Mammary epithelial cell (primary cell): ENCODE measurements at regions of chr3 and their contacts with region 1.

Region 1: GRCh38 chr3:107676469-107677309 is 153.9 kb downstream of the BBX start:
- DNase-seq: no peak
- H3K4me3 ChIP-seq: no peak overlapping the region
- H3K27ac ChIP-seq: no peak overlapping the region
- H3K4me1 ChIP-seq: no peaks in the 10 kb centered on the region
- H3K27me3 ChIP-seq: no peaks in the 10 kb centered on the region
- CTCF ChIP-seq: peak; percentile 46 to 52

Region 2: GRCh38 chr3:107429320-107430181 is 247.1 kb before region 1 on chr3:
- CTCF ChIA-PET with region 1: no interaction called
- dilution Hi-C with region 1: no loop called
- in situ Hi-C with region 1: no loop called
- intact Hi-C with region 1: no loop called
- DNase-seq: peak; percentile 75
- H3K4me3 ChIP-seq: peak overlapping the region; percentile 38 to 44 (median 38)
- H3K27ac ChIP-seq: no peak overlapping the region
- H3K4me1 ChIP-seq: peaks cover 32% of the 10 kb centered on the region
- H3K27me3 ChIP-seq: no peaks in the 10 kb centered on the region
- CTCF ChIP-seq: peak; percentile 63 to 91

Region 3: GRCh38 chr3:107496855-107497254 is 179.8 kb before region 1 on chr3:
- CTCF ChIA-PET with region 1: no interaction called
- dilution Hi-C with region 1: no loop called
- in situ Hi-C with region 1: no loop called
- intact Hi-C with region 1: no loop called
- DNase-seq: no peak
- H3K4me3 ChIP-seq: no peak overlapping the region
- H3K27ac ChIP-seq: no peak overlapping the region
- H3K4me1 ChIP-seq: no peaks in the 10 kb centered on the region
- H3K27me3 ChIP-seq: peaks cover 5% of the 10 kb centered on the region
- CTCF ChIP-seq: no peak

Region 4: DNA sequence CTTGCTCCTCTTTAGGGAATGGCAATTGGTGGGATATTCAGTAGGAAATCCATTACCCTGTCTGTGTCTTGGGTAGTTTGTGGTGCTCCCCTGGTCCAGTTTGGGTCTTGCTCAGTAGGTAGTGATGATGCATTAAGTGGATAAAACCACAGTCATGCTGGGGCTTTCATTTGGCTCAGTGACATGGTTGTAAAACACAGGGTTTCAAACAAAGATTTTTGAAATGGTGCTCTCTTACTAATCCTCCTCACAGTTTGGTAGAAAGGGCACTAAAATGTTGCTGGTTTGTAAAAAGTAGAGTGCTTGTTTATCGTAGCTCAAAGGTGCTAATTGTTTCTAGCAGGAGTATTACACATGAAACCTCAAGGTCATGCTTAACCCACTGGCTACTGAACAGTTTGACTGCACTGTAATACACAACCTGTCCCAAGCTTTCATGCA is 131.0 kb before region 1 on chr3:
- CTCF ChIA-PET with region 1: no interaction called
- dilution Hi-C with region 1: no loop called
- in situ Hi-C with region 1: no loop called
- intact Hi-C with region 1: no loop called
- DNase-seq: peak; percentile 14
- H3K4me3 ChIP-seq: no peak overlapping the region
- H3K27ac ChIP-seq: no peak overlapping the region
- H3K4me1 ChIP-seq: no peaks in the 10 kb centered on the region
- H3K27me3 ChIP-seq: no peaks in the 10 kb centered on the region
- CTCF ChIP-seq: no peak

Region 5: GRCh38 chr3:107620534-107620933 is 56.2 kb before region 1 on chr3:
- CTCF ChIA-PET with region 1: no interaction called
- dilution Hi-C with region 1: no loop called
- in situ Hi-C with region 1: no loop called
- intact Hi-C with region 1: no loop called
- DNase-seq: no peak
- H3K4me3 ChIP-seq: no peak overlapping the region
- H3K27ac ChIP-seq: no peak overlapping the region
- H3K4me1 ChIP-seq: peaks cover 4% of the 10 kb centered on the region
- H3K27me3 ChIP-seq: no peaks in the 10 kb centered on the region
- CTCF ChIP-seq: peak in 1 of 2 donors; percentile 3

Region 6: GRCh38 chr3:107660306-107660976 is 16.2 kb before region 1 on chr3:
- CTCF ChIA-PET with region 1: interaction called, 11 read pairs
- dilution Hi-C with region 1: no loop called
- in situ Hi-C with region 1: no loop called
- intact Hi-C with region 1: no loop called
- DNase-seq: no peak
- H3K4me3 ChIP-seq: no peak overlapping the region
- H3K27ac ChIP-seq: no peak overlapping the region
- H3K4me1 ChIP-seq: no peaks in the 10 kb centered on the region
- H3K27me3 ChIP-seq: no peaks in the 10 kb centered on the region
- CTCF ChIP-seq: peak; percentile 66

Region 7: DNA sequence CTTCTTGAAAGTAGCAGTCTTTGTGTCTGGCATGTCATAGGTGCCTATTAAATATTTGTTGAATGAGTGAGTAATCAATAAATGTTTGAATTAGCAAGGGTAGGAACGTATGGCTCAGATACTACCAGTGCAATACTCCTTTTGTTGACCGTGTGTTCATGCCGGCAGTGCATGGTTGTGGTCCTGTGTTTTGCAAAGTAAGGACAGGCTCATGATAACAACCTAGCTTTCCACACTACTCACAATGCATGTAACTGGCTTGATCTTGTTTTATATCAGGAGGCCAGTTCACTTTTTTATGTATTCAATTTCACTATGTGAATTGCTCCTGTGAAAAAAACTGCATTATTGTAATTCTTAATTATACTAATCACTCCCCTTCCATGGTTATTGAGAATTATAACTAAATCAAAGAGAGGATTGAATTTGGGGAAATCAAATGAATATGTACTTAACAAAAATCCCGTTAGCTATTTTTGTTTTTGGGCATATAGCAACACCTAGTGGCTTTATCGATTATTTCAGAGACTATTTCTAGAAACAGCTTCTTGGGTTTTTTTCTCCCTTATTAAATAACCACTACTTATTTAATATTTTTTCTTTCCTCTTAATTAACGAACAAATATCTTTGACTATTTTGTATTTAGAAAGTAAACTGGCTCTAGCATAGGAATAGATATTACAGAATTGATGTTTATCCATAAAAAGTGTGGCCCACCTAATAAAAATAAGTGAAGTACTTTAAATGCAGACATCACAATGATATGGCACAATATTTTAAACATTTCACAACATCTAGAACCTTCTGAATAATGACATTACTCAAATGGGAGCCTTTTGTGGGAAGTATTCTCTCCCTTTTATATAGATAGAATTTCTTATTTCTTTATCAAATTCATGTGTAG is 64.6 kb after region 1 on chr3:
- CTCF ChIA-PET with region 1: no interaction called
- dilution Hi-C with region 1: no loop called
- in situ Hi-C with region 1: loop called in 1 of 2 experiments (anchors 10 kb)
- intact Hi-C with region 1: loop called (anchors 1 kb)
- DNase-seq: peak; percentile 11
- H3K4me3 ChIP-seq: no peak overlapping the region
- H3K27ac ChIP-seq: no peak overlapping the region
- H3K4me1 ChIP-seq: no peaks in the 10 kb centered on the region
- H3K27me3 ChIP-seq: no peaks in the 10 kb centered on the region
- CTCF ChIP-seq: peak; percentile 43 to 47

Region 8: GRCh38 chr3:107846279-107846852 is 169.7 kb after region 1 on chr3:
- CTCF ChIA-PET with region 1: no interaction called
- dilution Hi-C with region 1: no loop called
- in situ Hi-C with region 1: no loop called
- intact Hi-C with region 1: loop called (anchors 5 kb)
- DNase-seq: peak; percentile 25
- H3K4me3 ChIP-seq: no peak overlapping the region
- H3K27ac ChIP-seq: no peak overlapping the region
- H3K4me1 ChIP-seq: no peaks in the 10 kb centered on the region
- H3K27me3 ChIP-seq: no peaks in the 10 kb centered on the region
- CTCF ChIP-seq: peak; percentile 56 to 71

Region 9: DNA sequence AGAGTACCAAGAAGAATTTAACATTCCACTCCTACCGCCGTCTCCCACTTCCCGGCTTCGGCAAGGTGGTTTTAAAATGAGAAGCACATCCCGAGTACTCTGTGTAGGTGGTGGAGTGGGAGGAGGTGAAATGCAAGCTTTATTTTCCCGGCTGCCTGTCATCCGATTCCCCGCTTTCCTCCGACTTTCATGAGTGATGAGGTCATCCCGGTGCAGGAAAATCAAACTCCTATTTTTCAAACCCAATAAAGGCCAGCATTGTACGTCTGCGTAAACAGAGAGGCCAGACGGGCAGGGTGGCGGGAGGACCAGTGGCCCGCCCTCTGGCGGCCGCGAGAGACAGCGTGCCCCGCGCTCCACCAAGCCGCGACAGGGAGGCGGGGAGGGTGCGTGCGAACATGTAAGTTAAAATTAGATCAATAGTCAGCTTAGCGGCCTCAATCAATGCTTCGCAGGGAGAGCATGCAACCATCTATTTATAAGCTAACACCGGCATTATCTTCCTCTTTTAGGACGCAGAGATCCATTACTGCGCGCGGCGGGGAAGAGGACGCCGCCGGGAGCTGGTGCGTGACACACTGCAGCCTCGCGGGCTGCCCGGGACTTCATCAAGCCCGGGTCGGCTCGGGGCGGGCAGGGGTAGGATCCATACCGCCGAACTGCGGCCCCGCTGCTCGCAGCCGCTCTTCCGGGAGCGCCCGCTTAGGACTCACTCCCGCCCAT is 250.8 kb after region 1 on chr3:
- CTCF ChIA-PET with region 1: no interaction called
- dilution Hi-C with region 1: no loop called
- in situ Hi-C with region 1: no loop called
- intact Hi-C with region 1: loop called (anchors 1 kb)
- DNase-seq: peak; percentile 69
- H3K4me3 ChIP-seq: peak overlapping the region; percentile 47 to 67 (median 52)
- H3K27ac ChIP-seq: no peak overlapping the region
- H3K4me1 ChIP-seq: no peaks in the 10 kb centered on the region
- H3K27me3 ChIP-seq: peaks cover 2% of the 10 kb centered on the region
- CTCF ChIP-seq: peak; percentile 78 to 96